ENCODE measurements at regions of chr1 and their contacts with region 1.

Region 1: GRCh38 chr1:12658531-12659453 is 14.9 kb downstream of the AADACL4 start:
- DNase-seq: peak; percentile 74 to 87
- ATAC-seq: peak; percentile 90
- H3K4me3 ChIP-seq: no peak overlapping the region
- H3K27ac ChIP-seq: no peak overlapping the region
- H3K4me1 ChIP-seq: no peaks in the 10 kb centered on the region
- H3K27me3 ChIP-seq: no peaks in the 10 kb centered on the region

Region 2: DNA sequence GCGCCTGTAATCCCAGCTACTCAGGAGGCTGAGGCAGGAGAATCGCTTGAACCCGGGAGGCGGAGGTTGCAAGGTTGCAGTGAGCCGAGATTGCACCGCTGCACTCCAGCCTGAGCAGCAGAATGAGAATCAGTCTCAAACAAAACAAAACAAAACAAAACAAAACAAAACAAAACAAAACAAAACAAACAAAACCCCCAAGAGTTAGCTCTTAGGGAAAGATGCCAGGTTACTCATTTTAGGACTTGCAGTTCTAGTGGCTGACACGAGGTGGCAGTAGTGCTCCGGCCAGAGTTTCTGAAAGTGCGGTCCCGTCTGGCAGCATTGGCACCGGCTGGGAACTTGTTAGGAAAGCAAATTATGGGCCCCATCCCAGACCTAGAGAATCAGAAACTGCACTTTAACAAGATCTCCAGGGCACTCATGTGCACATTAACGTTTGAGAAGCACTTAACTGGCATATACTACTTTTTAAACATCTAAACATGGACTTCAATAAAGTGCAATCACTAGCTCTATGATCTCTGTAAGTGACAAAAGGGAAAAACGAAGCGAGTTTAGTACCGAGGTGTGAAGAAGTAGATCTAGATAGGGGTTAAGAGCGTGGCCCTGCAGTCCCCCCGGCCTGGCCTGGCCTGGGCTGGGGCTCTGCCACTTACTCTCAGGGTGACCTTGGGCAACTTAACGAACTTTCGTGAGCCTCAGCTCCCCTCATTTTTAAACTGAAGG is 533.9 kb before region 1 on chr1:
- intact Hi-C with region 1: loop called in 1 of 2 experiments (anchors 10 kb)
- DNase-seq: peak; percentile 84 to 90
- ATAC-seq: peak; percentile 83
- H3K4me3 ChIP-seq: no peak overlapping the region
- H3K27ac ChIP-seq: no peak overlapping the region
- H3K4me1 ChIP-seq: no peaks in the 10 kb centered on the region
- H3K27me3 ChIP-seq: peaks cover 0 to 3% of the 10 kb centered on the region in 2 donors

Region 3: DNA sequence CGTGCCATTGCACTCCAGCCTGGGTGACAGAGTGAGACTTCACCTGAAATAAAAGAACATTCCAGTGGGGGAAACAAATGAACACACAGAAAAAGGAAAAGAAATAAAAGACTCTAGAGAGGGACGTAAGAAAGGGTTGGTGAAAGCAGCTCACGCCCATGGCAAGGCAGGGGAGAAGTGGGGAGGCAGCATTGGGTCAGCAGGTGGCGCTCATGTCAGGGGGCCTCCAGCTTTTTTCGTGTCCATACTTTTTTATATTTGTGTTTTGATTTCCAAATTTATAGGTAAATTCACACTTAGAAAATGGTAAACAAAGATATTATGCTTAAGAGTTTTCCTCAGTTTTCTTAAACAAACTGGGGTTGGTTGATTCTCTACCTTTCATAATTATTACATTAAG is 383.4 kb before region 1 on chr1:
- intact Hi-C with region 1: loop called (anchors 5 kb)
- DNase-seq: peak; percentile 63 to 84
- ATAC-seq: no peak
- H3K4me3 ChIP-seq: no peak overlapping the region
- H3K27ac ChIP-seq: no peak overlapping the region
- H3K4me1 ChIP-seq: no peaks in the 10 kb centered on the region
- H3K27me3 ChIP-seq: no peaks in the 10 kb centered on the region

Region 4: DNA sequence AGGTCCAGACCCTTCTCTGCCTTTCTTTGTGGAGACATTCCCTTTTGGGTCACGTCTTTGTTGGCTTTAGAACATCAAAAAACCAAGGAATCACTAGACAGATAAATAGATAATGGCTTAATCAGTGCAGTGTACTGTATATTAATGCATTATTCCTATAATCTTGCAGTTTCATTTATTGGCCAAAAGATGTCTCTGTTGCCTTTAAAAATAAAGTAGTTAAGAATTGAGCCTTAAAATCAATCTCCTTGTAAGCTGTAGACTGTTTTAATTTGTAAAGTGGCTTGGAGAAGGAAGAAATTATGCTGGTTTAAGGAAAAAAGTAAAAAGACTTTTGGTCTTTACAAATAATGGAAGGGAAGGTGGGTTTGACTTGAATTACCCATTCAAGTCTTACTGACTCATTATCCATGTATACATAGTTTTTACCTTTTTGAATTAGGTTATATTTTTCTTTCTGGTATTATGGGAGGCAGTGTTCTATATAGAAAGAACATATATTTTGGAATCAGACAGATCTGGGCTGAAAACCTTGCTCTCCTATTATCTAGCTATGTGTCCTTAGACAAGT is 344.4 kb before region 1 on chr1:
- intact Hi-C with region 1: loop called (anchors 1 to 2 kb)
- DNase-seq: no peak
- ATAC-seq: peak; percentile 53
- H3K4me3 ChIP-seq: no peak overlapping the region
- H3K27ac ChIP-seq: no peak overlapping the region
- H3K4me1 ChIP-seq: peaks cover 0 to 3% of the 10 kb centered on the region in 2 donors
- H3K27me3 ChIP-seq: no peaks in the 10 kb centered on the region